ENCODE measurements at regions of chr2 and their contacts with region 1.

Region 1: DNA sequence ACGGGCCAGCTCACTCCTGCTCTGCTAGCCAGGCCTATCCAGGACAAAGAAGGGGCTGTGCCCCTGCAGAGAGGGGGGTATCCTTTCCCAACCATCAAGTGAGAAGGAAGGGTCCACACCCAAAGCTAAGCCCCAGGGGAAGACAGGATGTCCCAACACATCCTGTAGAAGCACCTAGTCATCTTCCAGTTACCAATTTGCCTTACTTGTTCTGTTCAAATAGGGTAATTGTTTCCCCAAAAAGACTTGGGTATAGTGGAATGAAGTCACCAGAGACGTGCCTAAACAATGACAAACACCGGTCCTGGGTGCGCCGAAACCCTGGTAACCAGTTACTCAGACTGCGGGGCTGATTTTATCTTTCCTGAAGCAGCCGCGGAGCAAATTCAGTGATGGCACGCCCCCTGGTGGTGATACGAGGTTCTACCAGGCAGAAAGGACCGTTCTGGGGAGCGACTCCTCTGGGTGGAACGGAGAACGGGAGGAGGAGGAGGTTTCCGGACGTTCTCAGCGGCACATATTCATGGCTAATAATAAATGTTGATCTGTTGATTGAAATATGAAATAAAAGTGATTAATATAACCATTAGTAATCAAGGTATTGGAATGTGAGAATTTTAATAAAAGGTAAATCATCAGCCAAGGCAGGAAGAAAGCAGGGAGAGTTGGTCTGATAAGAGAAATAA is 109.3 kb upstream of the STON1 start:
- DNase-seq: peak; percentile 85
- ATAC-seq: peak; percentile 92
- H3K4me3 ChIP-seq: peak overlapping the region in 1 of 2 experiments; percentile 19; a peak in 1 of 4 replicates
- H3K27ac ChIP-seq: peak overlapping the region; percentile 25; the same call in 1 of the 2 replicates
- H3K4me1 ChIP-seq: no peaks in the 10 kb centered on the region
- H3K27me3 ChIP-seq: no peaks in the 10 kb centered on the region
- CTCF ChIP-seq: peak; percentile 94

Region 2: DNA sequence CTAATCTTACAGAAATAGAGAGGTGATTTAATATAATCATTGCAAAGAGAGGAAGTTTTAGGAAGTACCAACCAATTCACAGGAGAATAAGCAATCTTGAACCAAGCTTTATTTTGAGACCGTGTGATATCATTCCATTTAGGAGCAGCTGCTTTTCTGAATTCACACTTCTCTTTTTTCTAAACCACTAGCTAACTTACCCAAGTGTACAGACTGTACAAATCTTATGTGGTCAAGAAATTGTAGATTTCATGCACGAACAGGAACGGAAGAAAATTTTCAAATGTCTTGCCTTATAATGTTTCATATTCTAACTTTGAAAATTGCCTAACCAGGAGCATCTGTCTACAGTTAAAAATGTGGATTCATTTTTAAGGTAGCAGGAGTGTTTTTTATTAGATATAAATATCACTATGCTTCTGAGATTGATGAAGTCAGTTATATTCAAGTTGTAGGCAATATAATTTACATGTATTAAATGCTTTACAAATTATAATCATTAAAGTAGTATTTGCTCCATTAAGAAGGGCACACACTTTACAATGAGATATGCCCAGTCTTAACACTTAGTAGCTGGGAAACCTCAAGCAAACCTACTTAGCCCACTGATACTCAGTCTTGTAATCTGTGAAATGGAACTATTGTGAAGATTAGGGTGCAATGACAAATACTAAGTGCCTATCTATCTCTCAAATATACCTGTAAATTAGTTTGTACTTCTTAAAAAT is 192.9 kb before region 1 on chr2:
- CTCF ChIA-PET with region 1: no interaction called
- POLR2A ChIA-PET with region 1: no interaction called
- in situ Hi-C with region 1: no loop called
- intact Hi-C with region 1: loop called (anchors 10 kb)
- DNase-seq: no peak
- ATAC-seq: no peak
- H3K4me3 ChIP-seq: no peak overlapping the region
- H3K27ac ChIP-seq: no peak overlapping the region
- H3K4me1 ChIP-seq: no peaks in the 10 kb centered on the region
- H3K27me3 ChIP-seq: no peaks in the 10 kb centered on the region
- CTCF ChIP-seq: no peak

Region 3: GRCh38 chr2:50419778-50420177 is 1999.1 kb after region 1 on chr2:
- CTCF ChIA-PET with region 1: no interaction called
- POLR2A ChIA-PET with region 1: interaction called, 12 read pairs
- in situ Hi-C with region 1: no loop called
- intact Hi-C with region 1: no loop called
- DNase-seq: no peak
- ATAC-seq: no peak
- H3K4me3 ChIP-seq: no peak overlapping the region
- H3K27ac ChIP-seq: no peak overlapping the region
- H3K4me1 ChIP-seq: no peaks in the 10 kb centered on the region
- H3K27me3 ChIP-seq: no peaks in the 10 kb centered on the region
- CTCF ChIP-seq: no peak

Measured in Panc1 (cell line).